B cell (primary cell): ENCODE measurements at regions of chr5 and their contacts with region 1.

Region 1: DNA sequence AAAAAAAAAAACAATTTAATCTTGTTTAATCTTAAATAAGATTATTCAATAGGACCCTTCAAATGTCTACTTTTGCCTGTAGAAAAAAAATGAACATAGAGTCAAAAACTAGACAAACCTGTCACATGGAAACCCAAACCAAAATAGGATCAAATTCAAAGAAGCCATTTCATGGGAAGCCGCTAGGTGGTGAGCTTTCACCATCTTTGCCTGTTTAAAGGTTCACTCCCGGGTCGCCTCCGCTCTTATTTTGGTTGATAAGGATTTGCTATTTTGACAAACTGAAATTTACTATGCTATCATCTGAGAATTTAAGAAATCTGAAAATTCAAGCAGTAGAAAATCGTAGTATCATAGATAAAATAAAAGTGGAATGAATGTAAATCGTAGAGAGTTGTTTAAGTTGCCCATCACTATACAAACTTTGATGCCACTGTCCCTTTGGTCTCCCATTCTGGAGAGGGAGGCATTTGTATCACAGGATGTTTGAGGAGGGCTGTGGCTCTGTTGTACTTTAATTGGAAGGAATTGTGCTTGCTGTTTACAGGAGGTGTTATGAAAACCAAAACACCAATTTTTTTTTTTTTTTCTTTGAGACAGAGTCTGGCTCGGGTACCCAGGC is 43.5 kb upstream of the DNAH5 start:
- DNase-seq: peak; percentile 65
- ATAC-seq: no peak
- H3K4me3 ChIP-seq: no peak overlapping the region
- H3K4me3 Mint-ChIP-seq: no peak overlapping the region
- H3K27ac ChIP-seq: no peak overlapping the region
- H3K27ac Mint-ChIP-seq: no peak overlapping the region
- H3K4me1 ChIP-seq: no peaks in the 10 kb centered on the region
- H3K4me1 Mint-ChIP-seq: peaks cover 2% of the 10 kb centered on the region
- H3K27me3 ChIP-seq: no peaks in the 10 kb centered on the region
- H3K27me3 Mint-ChIP-seq: peaks cover 17% of the 10 kb centered on the region
- CTCF ChIP-seq: peak; percentile 83

Region 2: GRCh38 chr5:13878357-13878756 is 109.6 kb before region 1 on chr5:
- CTCF ChIA-PET with region 1: no interaction called
- POLR2A ChIA-PET with region 1: no interaction called
- intact Hi-C with region 1: no loop called
- DNase-seq: no peak
- ATAC-seq: no peak
- H3K4me3 ChIP-seq: no peak overlapping the region
- H3K4me3 Mint-ChIP-seq: no peak overlapping the region
- H3K27ac ChIP-seq: no peak overlapping the region
- H3K27ac Mint-ChIP-seq: no peak overlapping the region
- H3K4me1 ChIP-seq: no peaks in the 10 kb centered on the region
- H3K4me1 Mint-ChIP-seq: no peaks in the 10 kb centered on the region
- H3K27me3 ChIP-seq: no peaks in the 10 kb centered on the region
- H3K27me3 Mint-ChIP-seq: no peaks in the 10 kb centered on the region
- CTCF ChIP-seq: no peak

Region 3: GRCh38 chr5:14351845-14352712 is 364.1 kb after region 1 on chr5:
- CTCF ChIA-PET with region 1: interaction called, 13 read pairs
- POLR2A ChIA-PET with region 1: no interaction called
- intact Hi-C with region 1: loop called (anchors 1 kb)
- DNase-seq: peak; percentile 72
- ATAC-seq: peak; percentile 93
- H3K4me3 ChIP-seq: no peak overlapping the region
- H3K4me3 Mint-ChIP-seq: no peak overlapping the region
- H3K27ac ChIP-seq: no peak overlapping the region
- H3K27ac Mint-ChIP-seq: peak overlapping the region; percentile 68
- H3K4me1 ChIP-seq: peaks cover 9 to 21% of the 10 kb centered on the region in 2 donors
- H3K4me1 Mint-ChIP-seq: peaks cover 32% of the 10 kb centered on the region
- H3K27me3 ChIP-seq: no peaks in the 10 kb centered on the region
- H3K27me3 Mint-ChIP-seq: no peaks in the 10 kb centered on the region
- CTCF ChIP-seq: peak; percentile 96